ENCODE measurements at regions of chr10 and their contacts with region 1.

Region 1: GRCh38 chr10:49803988-49804387 is 41.9 kb upstream of the OGDHL start:
- DNase-seq: no peak
- H3K4me3 ChIP-seq: no peak overlapping the region
- H3K27ac ChIP-seq: no peak overlapping the region
- H3K4me1 ChIP-seq: no peaks in the 10 kb centered on the region
- H3K27me3 ChIP-seq: no peaks in the 10 kb centered on the region
- CTCF ChIP-seq: no peak
- POLR2A ChIP-seq: no peak

Region 2: DNA sequence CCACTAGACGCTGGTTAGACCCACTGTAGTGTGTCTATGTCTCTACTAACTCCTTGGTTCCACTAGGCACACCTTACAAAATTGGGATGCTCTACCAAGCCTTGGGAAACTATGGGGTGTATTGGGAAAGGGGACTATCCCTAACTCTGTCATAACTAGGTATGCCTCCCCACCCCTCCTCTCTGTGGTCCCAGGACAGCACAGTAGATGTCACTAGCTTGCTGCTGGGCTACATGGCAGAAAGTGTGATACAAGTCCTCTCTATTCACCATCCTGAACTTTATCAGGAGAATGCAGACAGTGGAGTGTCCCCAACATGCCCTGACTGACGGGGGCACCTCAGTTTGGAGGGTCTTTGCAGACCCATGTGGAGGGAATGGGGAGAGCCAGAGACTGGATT is 585.5 kb before region 1 on chr10:
- intact Hi-C with region 1: loop called (anchors 5 kb)
- DNase-seq: no peak
- H3K4me3 ChIP-seq: no peak overlapping the region
- H3K27ac ChIP-seq: no peak overlapping the region
- H3K4me1 ChIP-seq: no peaks in the 10 kb centered on the region
- H3K27me3 ChIP-seq: peaks cover 0 to 5% of the 10 kb centered on the region in 2 donors
- CTCF ChIP-seq: no peak
- POLR2A ChIP-seq: no peak

Region 3: DNA sequence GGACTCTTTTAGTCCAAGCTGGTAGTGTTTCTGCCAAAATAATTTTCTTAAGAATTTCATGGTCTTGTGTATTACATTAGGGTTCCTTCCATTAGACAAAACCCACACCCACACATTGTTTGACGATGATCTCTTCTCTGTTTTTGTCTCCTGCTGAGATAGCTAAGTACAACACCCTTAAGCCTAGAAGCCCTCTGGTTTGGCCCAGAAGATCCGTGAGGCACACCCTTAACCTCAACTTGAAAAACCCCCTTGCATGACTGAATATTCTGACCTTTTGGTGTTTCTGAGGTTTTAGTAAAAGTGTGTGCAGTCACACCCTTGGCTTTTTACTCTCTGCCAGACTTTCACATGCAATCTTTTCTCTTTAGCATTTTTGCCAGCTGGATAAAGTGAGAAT is 235.8 kb before region 1 on chr10:
- intact Hi-C with region 1: no loop called
- DNase-seq: no peak
- H3K4me3 ChIP-seq: no peak overlapping the region
- H3K27ac ChIP-seq: no peak overlapping the region
- H3K4me1 ChIP-seq: no peaks in the 10 kb centered on the region
- H3K27me3 ChIP-seq: no peaks in the 10 kb centered on the region
- CTCF ChIP-seq: no peak
- POLR2A ChIP-seq: no peak

Region 4: DNA sequence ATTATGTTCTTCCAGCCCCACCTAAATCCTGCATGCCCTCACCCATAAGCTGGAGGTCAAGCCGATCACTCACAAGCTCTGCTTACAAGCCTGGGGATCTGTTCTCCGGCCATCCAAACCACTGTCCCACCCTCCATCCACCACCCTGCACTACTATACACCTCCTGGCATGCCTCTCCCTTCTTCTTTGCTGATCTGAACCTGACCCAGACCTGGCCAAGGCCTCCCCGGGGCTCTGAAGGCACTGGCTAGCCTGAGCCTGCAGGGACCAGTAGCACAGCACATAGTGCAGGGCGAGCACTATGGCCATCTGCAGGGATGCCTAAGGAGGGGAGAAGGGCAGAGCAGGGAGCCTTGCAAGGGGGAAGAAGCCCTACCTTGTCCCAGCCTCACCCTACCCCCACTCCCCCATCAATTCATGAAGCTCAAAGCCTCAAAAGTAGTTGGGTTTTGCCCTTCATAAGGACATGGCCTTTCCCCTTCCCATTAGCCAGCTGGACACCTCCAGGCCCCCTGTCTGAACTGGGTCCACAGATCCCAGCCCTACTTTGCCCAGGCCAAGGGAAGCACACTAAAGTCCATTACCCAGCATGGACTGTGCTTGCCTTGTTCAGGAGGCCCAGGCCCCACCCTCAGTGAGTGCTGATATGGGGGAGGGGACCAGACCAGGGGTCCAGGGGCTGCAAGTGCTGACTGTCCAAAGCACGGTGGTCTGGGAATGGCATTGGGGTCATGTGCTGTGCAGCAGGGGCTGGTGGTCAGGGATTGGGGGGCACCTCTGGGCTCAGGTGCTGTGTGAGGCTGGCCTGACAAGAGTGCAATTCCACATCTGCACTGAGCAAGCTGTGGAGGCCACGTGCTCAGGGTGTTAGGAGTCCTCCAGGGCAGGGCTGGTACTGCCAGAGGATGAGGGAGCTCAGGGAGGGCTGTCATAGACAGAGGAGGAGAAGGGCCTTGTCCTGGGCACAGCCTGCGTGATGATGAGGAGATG is 160.5 kb before region 1 on chr10:
- intact Hi-C with region 1: no loop called
- DNase-seq: peak in 1 of 2 donors; percentile 35
- H3K4me3 ChIP-seq: no peak overlapping the region
- H3K27ac ChIP-seq: no peak overlapping the region
- H3K4me1 ChIP-seq: no peaks in the 10 kb centered on the region
- H3K27me3 ChIP-seq: peaks cover 0 to 49% of the 10 kb centered on the region in 2 donors
- CTCF ChIP-seq: no peak
- POLR2A ChIP-seq: no peak

Region 5: DNA sequence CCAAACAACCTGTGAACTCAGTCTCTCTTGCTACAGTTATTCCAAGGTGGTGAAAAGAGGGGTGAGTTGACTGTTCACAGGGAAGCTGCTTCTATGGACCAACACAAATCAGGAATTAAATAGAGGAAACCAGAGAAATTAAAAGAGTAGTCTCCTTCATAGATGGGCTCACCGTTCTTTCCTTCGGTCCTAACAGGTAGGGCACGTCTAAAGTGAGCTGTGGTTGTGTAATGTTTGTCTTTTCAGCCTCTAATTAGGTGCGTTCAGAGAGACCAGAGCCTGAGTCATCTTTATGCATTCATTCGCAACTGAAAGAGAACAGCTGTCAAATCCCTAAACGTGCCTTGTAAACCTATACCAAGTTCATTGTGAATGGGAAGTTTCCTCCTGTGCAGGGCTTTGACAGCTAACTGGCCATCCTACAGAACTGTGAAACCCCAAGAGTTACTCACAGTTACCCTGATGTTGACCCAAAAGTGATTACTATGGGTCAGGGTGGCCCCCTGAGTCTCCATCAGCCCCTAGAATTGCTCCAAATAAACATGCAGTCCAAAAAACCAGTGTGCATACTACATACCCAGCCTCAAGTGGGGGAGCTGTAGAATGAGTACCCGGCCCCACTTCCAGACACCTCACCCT is 142.7 kb before region 1 on chr10:
- intact Hi-C with region 1: no loop called
- DNase-seq: no peak
- H3K4me3 ChIP-seq: no peak overlapping the region
- H3K27ac ChIP-seq: no peak overlapping the region
- H3K4me1 ChIP-seq: no peaks in the 10 kb centered on the region
- H3K27me3 ChIP-seq: peaks cover 0 to 4% of the 10 kb centered on the region in 2 donors
- CTCF ChIP-seq: no peak
- POLR2A ChIP-seq: no peak

Measured in breast epithelium (tissue), 4 donors.